Activated CD4-positive, alpha-beta T cell treated with anti-CD3 and anti-CD28 coated beads, Interleukin-2, amount 10 ng/mL, durations not matched to agents 24 days and 14 days (primary cell): ENCODE measurements at regions of chr12 and their contacts with region 1.

Region 1: GRCh38 chr12:75784591-75784990 is 247.0 kb downstream of the PHLDA1 start:
- DNase-seq: no peak
- H3K4me3 Mint-ChIP-seq: no peak overlapping the region
- H3K27ac Mint-ChIP-seq: no peak overlapping the region
- H3K4me1 Mint-ChIP-seq: peaks cover 9% of the 10 kb centered on the region
- H3K27me3 Mint-ChIP-seq: peaks cover 4% of the 10 kb centered on the region

Region 2: DNA sequence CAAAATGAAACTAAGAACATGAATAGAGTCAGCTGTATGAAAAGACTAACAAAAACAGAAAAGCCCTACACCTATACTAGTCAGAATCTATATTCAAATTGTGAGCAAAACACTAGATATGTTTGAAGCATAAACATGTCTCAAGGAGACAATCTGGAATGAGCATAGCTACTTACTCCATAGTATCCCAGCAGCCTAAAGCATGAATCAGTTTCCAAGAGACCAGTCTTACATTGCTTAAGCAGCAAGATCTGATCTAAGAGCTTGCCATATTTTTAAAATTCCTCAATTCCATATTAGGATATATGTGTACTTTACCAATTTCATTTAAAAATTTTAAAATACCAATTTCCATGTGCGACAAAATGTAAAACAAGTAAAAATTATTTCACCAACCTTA is 462.1 kb before region 1 on chr12:
- intact Hi-C with region 1: no loop called
- DNase-seq: no peak
- H3K4me3 Mint-ChIP-seq: no peak overlapping the region
- H3K27ac Mint-ChIP-seq: no peak overlapping the region
- H3K4me1 Mint-ChIP-seq: no peaks in the 10 kb centered on the region
- H3K27me3 Mint-ChIP-seq: peaks cover 25% of the 10 kb centered on the region

Region 3: DNA sequence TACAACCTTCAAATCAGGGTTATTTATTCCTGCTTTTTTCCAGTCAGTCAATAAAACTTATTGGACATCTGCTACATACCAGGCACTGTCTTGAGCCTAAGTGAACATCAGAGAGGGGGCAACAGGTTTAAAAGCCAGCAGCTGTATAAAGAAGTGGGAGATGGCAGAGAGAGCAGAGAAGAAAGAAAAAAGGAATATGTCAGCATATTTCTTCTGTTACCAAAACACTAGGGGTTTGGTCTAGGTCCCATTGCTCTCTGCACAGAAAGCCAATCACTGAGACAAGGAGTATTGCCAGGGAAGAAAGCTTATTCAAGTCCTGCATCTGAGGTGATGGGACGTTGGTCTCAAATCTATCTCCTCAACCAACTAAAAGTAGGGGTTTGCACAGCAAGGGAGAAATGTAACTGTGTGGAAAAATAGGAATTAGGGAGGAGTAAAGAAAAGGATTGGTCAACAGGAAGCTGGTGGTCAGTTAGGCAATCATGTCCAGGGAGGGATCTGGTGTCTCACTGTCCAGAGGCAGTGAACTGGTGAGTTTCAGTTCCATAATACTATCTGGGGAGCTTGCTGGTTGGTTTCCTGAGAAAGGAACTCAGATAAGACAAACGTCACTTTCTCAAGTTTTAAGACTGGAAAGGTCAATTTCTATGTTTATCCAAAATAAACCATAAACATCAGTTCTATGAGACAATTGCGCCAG is 139.5 kb after region 1 on chr12:
- intact Hi-C with region 1: loop called (anchors 5 kb)
- DNase-seq: no peak
- H3K4me3 Mint-ChIP-seq: no peak overlapping the region
- H3K27ac Mint-ChIP-seq: peak overlapping the region; percentile 54
- H3K4me1 Mint-ChIP-seq: peaks cover 21% of the 10 kb centered on the region
- H3K27me3 Mint-ChIP-seq: no peaks in the 10 kb centered on the region